Right ventricle myocardium superior (tissue), 1 donor: ENCODE measurements at regions of chr2 and their contacts with region 1.

Region 1: GRCh38 chr2:188978291-188979081 is 4.3 kb downstream of the COL3A1 start:
- DNase-seq: no peak
- ATAC-seq: peak; percentile 55

Region 2: GRCh38 chr2:188682838-188683237 is 295.6 kb before region 1 on chr2:
- intact Hi-C with region 1: no loop called
- DNase-seq: no peak
- ATAC-seq: no peak

Region 3: DNA sequence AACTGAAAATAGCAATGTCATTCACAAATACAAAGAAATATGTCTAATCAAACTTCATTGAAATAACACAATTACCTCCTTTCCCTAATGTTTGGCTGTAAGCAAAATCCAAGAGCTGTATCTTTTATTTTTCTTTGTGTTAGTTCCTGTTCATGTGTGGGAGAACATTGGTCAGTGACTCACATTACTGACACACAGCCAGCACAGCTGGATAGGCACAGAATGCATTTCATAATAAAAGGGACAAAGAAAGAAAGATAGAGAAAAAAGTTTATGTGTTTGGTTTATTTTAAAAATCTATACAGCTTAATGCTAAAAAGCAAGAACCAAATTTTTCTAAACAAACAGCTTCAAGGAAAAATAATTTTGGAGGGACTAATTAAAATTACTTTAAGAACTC is 189.9 kb before region 1 on chr2:
- intact Hi-C with region 1: loop called (anchors 5 kb)
- DNase-seq: peak; percentile 63
- ATAC-seq: peak; percentile 83